A673 (cell line): ENCODE measurements at regions of chr17 and their contacts with region 1.

Region 1: GRCh38 chr17:70636517-70637133 is 467.3 kb downstream of the KCNJ2 start:
- DNase-seq: peak; percentile 58
- H3K4me3 ChIP-seq: no peak overlapping the region
- H3K27ac ChIP-seq: no peak overlapping the region
- H3K4me1 ChIP-seq: no peaks in the 10 kb centered on the region
- H3K27me3 ChIP-seq: no peaks in the 10 kb centered on the region
- CTCF ChIP-seq: peak; percentile 72

Region 2: GRCh38 chr17:70604854-70605253 is 31.8 kb before region 1 on chr17:
- CTCF ChIA-PET with region 1: no interaction called
- POLR2A ChIA-PET with region 1: no interaction called
- intact Hi-C with region 1: no loop called
- DNase-seq: peak; percentile 5
- H3K4me3 ChIP-seq: no peak overlapping the region
- H3K27ac ChIP-seq: no peak overlapping the region
- H3K4me1 ChIP-seq: no peaks in the 10 kb centered on the region
- H3K27me3 ChIP-seq: no peaks in the 10 kb centered on the region
- CTCF ChIP-seq: 0 out of 2 replicates have a peak, but pooled peaks have one; percentile 29

Region 3: DNA sequence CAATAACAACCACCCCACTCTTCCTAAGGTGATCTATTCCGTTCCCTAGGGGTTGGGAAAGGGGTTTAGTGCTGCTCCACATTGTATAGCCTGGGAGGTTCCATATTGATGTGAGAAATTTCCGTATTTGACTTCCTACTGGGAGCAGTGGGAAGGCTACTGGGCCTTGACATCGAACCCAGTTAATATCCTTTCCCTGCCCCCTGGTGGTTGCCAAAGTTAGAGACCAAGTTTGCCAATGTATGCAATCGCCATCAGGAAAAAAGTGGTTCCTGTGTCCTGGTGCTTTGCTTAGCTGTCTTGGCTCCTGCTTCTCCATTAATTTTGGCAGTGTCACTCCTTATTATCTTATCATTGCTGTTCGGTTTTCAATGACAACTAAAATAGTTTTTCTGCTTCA is 447.6 kb after region 1 on chr17:
- CTCF ChIA-PET with region 1: no interaction called
- POLR2A ChIA-PET with region 1: no interaction called
- intact Hi-C with region 1: loop called (anchors 5 kb)
- DNase-seq: peak; percentile 40
- H3K4me3 ChIP-seq: no peak overlapping the region
- H3K27ac ChIP-seq: no peak overlapping the region
- H3K4me1 ChIP-seq: no peaks in the 10 kb centered on the region
- H3K27me3 ChIP-seq: no peaks in the 10 kb centered on the region
- CTCF ChIP-seq: peak; percentile 54

Region 4: DNA sequence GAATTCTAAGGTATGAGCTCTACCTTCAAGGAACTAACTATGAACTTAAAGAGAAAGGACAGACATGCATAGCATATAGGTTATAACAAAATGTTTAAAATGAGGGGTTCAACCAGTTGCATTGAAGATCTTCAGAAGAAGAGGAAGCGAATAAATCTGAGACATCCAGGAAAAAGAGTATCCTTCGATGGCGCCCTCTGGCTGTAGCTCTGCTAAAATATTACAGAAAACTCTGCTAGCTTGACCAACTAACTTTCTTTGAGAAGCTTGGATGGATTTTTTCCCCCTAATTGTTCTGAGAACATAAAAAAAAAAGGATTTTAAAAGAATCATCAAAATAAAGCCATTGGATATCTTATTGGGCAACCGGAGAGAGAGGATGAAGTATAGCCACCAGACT is 824.3 kb after region 1 on chr17:
- CTCF ChIA-PET with region 1: no interaction called
- POLR2A ChIA-PET with region 1: no interaction called
- intact Hi-C with region 1: loop called (anchors 1 kb)
- DNase-seq: peak; percentile 40
- H3K4me3 ChIP-seq: no peak overlapping the region
- H3K27ac ChIP-seq: no peak overlapping the region
- H3K4me1 ChIP-seq: no peaks in the 10 kb centered on the region
- H3K27me3 ChIP-seq: no peaks in the 10 kb centered on the region
- CTCF ChIP-seq: peak; percentile 61